ENCODE measurements at regions of chr3 and their contacts with region 1.

Region 1: DNA sequence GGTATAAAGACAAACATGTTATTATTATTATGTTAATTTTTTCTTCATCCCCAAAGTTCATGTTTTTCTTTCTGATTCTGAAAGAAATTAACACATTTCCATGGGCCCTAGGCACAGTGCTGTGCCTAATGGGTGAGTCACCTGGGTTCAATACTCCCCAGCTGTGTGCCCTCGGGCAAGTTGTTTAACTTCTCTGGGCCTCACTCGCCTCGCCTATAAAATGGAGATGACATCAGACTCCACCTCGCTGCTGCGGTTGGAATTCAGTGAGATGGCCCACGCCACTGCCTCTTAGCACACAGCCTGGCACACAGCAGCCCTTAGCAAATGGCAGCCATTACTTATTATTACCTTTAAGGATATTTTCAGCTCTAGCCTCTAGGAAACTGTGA is 22.6 kb downstream of the DNASE1L3 start:
- DNase-seq: no peak
- H3K4me3 ChIP-seq: no peak overlapping the region
- H3K27ac ChIP-seq: no peak overlapping the region
- H3K4me1 ChIP-seq: peaks cover 0 to 4% (median 1%) of the 10 kb centered on the region in 4 experiments; a peak in 2 of 7 replicates
- H3K27me3 ChIP-seq: no peaks in the 10 kb centered on the region
- CTCF ChIP-seq: no peak
- EP300 ChIP-seq: no peak
- POLR2A ChIP-seq: no peak
- RAD21 ChIP-seq: no peak

Region 2: GRCh38 chr3:58167431-58168351 is 20.5 kb before region 1 on chr3:
- CTCF ChIA-PET with region 1: interaction called, 25 read pairs
- POLR2A ChIA-PET with region 1: no interaction called
- DNase-seq: peak in 1 of 2 experiments; percentile 92
- H3K4me3 ChIP-seq: no peak overlapping the region
- H3K27ac ChIP-seq: no peak overlapping the region; the same call in 1 of the 2 replicates
- H3K4me1 ChIP-seq: peaks cover 0 to 5% (median 2%) of the 10 kb centered on the region in 4 experiments; a peak in 2 of 7 replicates
- H3K27me3 ChIP-seq: no peaks in the 10 kb centered on the region
- CTCF ChIP-seq: peak; percentile 73 to 97 (median 95)
- EP300 ChIP-seq: no peak
- POLR2A ChIP-seq: no peak
- RAD21 ChIP-seq: peak; percentile 49 to 58

Region 3: DNA sequence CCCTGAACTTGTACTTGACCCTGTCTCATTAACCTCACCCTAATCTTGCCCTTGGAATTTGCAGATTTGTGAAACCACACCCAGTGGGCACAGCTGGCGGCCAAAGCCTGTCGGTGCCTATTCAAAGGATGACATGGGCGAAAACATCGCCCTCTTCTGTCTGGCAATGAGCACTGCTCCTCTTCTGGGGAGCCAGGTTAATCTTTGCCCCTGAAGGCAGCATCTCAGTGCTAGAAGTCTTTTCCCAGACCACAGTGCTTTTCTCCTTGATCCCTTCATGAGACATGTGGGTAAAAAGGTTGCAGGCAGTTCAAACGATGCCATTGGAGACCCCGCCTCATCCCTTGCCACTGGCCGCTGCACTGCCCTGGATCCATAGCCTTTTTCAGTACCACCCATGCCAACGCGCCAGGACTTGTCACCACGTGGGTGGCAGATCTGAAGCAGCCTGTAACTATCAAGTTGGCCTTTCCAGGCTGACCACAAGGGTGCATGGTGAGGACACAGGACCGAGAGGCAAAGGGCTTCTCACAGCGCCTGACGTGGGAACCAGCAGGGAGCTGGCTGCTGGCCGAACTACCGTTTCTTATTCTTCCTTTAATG is 29.1 kb after region 1 on chr3:
- CTCF ChIA-PET with region 1: interaction called, 37 read pairs
- POLR2A ChIA-PET with region 1: no interaction called
- DNase-seq: peak in 1 of 2 experiments; percentile 82
- H3K4me3 ChIP-seq: peak overlapping the region in 3 of 4 experiments; percentile 24 to 49 (median 36); a peak in 3 of 8 replicates
- H3K27ac ChIP-seq: no peak overlapping the region; the same call in 1 of the 2 replicates
- H3K4me1 ChIP-seq: peaks cover 0 to 3% (median under 1%) of the 10 kb centered on the region in 4 experiments; a peak in 3 of 7 replicates
- H3K27me3 ChIP-seq: no peaks in the 10 kb centered on the region
- CTCF ChIP-seq: peak; percentile 80 to 94 (median 81)
- EP300 ChIP-seq: no peak
- POLR2A ChIP-seq: no peak
- RAD21 ChIP-seq: peak; percentile 47 to 58

Region 4: DNA sequence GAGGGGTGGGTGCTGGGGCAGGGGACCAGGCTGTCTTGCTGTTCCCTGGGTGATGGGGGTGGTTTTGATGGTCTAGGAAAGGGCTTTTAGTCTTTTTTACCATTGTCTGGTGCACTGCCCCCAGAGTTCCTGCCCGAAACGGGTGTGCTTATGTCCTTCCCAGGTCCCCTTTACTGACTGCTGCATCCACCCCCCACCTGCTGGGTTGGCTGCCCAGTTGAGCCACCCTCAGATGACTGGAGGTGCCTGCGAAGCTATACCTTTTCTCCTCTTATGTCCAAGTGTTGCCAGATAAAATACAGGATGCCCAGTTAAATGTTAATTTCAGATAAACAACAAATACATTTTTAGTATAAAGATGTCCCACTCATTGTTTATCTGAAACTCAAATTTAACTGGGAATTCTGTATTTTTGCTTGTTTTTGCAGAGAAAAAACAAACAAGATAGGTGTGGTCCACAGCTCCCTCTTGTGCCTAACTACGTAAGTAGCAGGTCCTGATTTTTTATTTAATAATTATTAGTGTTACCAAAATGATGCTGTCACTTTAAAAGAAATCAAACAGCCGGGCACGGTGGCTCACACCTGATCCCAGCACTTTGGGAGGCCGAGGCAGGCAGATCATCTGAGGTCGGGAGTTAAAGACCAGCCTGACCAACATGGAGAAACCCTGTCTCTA is 111.8 kb after region 1 on chr3:
- CTCF ChIA-PET with region 1: interaction called, 177 read pairs
- POLR2A ChIA-PET with region 1: interaction called, 6 read pairs
- DNase-seq: peak in 1 of 2 experiments; percentile 53
- H3K4me3 ChIP-seq: no peak overlapping the region
- H3K27ac ChIP-seq: no peak overlapping the region
- H3K4me1 ChIP-seq: peaks cover 0 to 3% (median 0%) of the 10 kb centered on the region in 4 experiments; a peak in 1 of 7 replicates
- H3K27me3 ChIP-seq: no peaks in the 10 kb centered on the region; a peak in 1 of 7 replicates
- CTCF ChIP-seq: peak in 2 of 3 experiments; percentile 42 to 44; a peak in 2 of 4 replicates
- EP300 ChIP-seq: no peak
- POLR2A ChIP-seq: no peak
- RAD21 ChIP-seq: peak; percentile 68 to 76

Region 5: GRCh38 chr3:58414538-58415197 is 226.5 kb after region 1 on chr3:
- CTCF ChIA-PET with region 1: interaction called, 11 read pairs
- POLR2A ChIA-PET with region 1: no interaction called
- DNase-seq: peak in 1 of 2 experiments; percentile 61
- H3K4me3 ChIP-seq: no peak overlapping the region
- H3K27ac ChIP-seq: no peak overlapping the region
- H3K4me1 ChIP-seq: peaks cover 0 to 5% (median 4%) of the 10 kb centered on the region in 4 experiments; a peak in 2 of 7 replicates
- H3K27me3 ChIP-seq: no peaks in the 10 kb centered on the region
- CTCF ChIP-seq: peak in 2 of 3 experiments; percentile 64 to 77; a peak in 3 of 4 replicates
- EP300 ChIP-seq: no peak
- POLR2A ChIP-seq: no peak
- RAD21 ChIP-seq: peak; percentile 60 to 71